Activated CD4-positive, alpha-beta T cell treated with anti-CD3 and anti-CD28 coated beads for 36 hours (primary cell): ENCODE measurements at regions of chr13 and their contacts with region 1.

Region 1: GRCh38 chr13:111429064-111429558 is 108.7 kb downstream of the TEX29 start:
- DNase-seq: peak; percentile 64
- ATAC-seq: peak; percentile 77
- H3K4me3 Mint-ChIP-seq: no peak overlapping the region
- H3K27ac Mint-ChIP-seq: no peak overlapping the region
- H3K4me1 Mint-ChIP-seq: no peaks in the 10 kb centered on the region
- H3K27me3 Mint-ChIP-seq: peaks cover 11% of the 10 kb centered on the region

Region 2: DNA sequence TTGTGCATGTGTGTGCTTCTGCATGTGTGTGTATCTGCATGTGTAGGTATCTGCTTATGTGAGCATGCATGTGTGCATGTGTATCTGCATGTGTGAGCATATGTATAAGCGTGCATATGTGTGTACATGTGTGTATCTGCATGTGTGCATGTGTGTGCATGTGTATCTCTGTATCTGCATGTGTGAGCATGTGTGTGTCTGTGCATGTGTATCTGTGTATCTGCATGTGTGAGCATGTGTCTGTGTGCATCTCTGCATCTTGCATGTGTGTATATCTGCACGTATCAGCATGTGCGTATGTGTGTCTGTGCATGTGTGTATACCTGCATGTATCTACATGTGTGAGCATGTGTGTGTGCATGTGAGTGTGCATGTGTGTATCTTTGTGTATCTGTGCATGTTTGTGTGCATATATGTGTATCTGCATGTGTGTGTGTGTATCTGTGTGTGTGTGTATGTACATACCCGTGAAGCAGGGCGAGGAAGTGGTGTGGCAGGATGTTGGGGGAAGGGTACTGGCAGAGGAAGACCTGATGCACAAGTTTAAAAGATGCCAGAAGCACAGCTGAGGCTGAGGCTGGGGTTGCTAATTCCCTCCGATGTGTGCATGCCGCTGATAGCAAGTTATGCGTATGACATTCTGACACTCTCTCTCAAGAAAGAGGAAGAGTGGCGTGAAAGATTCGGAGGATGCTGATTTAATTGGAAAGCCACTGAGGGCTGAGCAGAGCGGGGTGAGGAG is 44.5 kb before region 1 on chr13:
- CTCF ChIA-PET with region 1: no interaction called
- POLR2A ChIA-PET with region 1: no interaction called
- intact Hi-C with region 1: loop called in 1 of 2 experiments (anchors 1 kb)
- DNase-seq: peak; percentile 53
- ATAC-seq: peak; percentile 75
- H3K4me3 Mint-ChIP-seq: no peak overlapping the region
- H3K27ac Mint-ChIP-seq: peak overlapping the region; percentile 16
- H3K4me1 Mint-ChIP-seq: peaks cover 34% of the 10 kb centered on the region
- H3K27me3 Mint-ChIP-seq: no peaks in the 10 kb centered on the region

Region 3: DNA sequence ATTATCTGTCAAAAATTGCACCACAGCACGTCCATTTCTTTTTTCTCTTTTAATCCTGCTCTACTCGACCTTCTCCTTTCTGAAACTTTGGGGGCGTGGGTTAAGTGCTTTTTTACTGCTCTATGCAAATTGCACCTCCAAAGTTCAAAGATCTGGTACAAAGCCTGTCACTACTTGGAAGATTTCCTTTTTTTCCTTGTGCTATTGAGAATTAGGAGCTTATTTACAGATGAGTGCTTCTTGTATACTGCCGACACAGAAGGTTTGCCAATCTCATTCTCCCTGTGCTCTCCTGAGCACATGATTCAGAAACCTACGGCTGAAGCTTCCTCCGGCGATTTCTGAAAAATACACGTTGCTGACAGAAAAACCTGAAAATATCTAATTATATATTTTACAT is 13.9 kb before region 1 on chr13:
- CTCF ChIA-PET with region 1: interaction called, 17 read pairs
- POLR2A ChIA-PET with region 1: no interaction called
- intact Hi-C with region 1: no loop called
- DNase-seq: no peak
- ATAC-seq: no peak
- H3K4me3 Mint-ChIP-seq: no peak overlapping the region
- H3K27ac Mint-ChIP-seq: no peak overlapping the region
- H3K4me1 Mint-ChIP-seq: no peaks in the 10 kb centered on the region
- H3K27me3 Mint-ChIP-seq: peaks cover 16% of the 10 kb centered on the region

Region 4: DNA sequence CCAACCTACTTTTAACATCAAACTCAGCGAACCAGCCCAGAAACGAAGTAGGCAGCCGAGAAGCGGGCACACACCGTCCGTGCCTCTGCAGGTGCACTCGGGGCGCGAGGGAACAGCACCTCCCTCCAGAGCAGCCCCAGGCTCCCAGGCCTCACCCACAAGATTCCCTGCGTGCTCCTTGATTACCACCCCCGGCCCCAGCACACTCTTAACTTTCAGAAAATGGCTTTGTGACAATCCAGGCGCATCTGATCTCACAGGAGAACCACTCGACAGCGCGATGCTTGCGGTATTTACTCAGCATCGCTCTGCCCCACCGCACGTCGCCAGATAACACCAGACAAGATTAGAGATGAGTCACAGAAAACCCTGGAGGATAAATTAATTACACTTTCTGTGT is 812.2 kb after region 1 on chr13:
- CTCF ChIA-PET with region 1: no interaction called
- POLR2A ChIA-PET with region 1: no interaction called
- intact Hi-C with region 1: no loop called
- DNase-seq: no peak
- ATAC-seq: no peak
- H3K4me3 Mint-ChIP-seq: no peak overlapping the region
- H3K27ac Mint-ChIP-seq: no peak overlapping the region
- H3K4me1 Mint-ChIP-seq: no peaks in the 10 kb centered on the region
- H3K27me3 Mint-ChIP-seq: peaks cover 2% of the 10 kb centered on the region